ENCODE measurements at regions of chr15 and their contacts with region 1.

Region 1: GRCh38 chr15:44654858-44655257 is 8.6 kb downstream of the SPG11 start:
- DNase-seq: no peak
- ATAC-seq: no peak
- H3K4me3 ChIP-seq: no peak overlapping the region
- H3K4me3 Mint-ChIP-seq: no peak overlapping the region
- H3K27ac ChIP-seq: no peak overlapping the region
- H3K27ac Mint-ChIP-seq: peak overlapping the region in 1 of 9 donors; percentile 31
- H3K4me1 ChIP-seq: no peaks in the 10 kb centered on the region
- H3K4me1 Mint-ChIP-seq: peaks cover 18 to 58% (median 49%) of the 10 kb centered on the region in 7 donors
- H3K27me3 ChIP-seq: no peaks in the 10 kb centered on the region
- H3K27me3 Mint-ChIP-seq: no peaks in the 10 kb centered on the region

Region 2: GRCh38 chr15:44633603-44634002 is 21.3 kb before region 1 on chr15:
- CTCF ChIA-PET with region 1: no interaction called
- POLR2A ChIA-PET with region 1: interaction called, 4 read pairs
- intact Hi-C with region 1: loop called in 1 of 2 experiments (anchors 2 kb)
- DNase-seq: no peak
- ATAC-seq: no peak
- H3K4me3 ChIP-seq: no peak overlapping the region
- H3K4me3 Mint-ChIP-seq: peak overlapping the region in 1 of 10 donors; percentile 51
- H3K27ac ChIP-seq: no peak overlapping the region
- H3K27ac Mint-ChIP-seq: peak overlapping the region in 4 of 9 donors; percentile 48 to 81 (median 56)
- H3K4me1 ChIP-seq: no peaks in the 10 kb centered on the region
- H3K4me1 Mint-ChIP-seq: peaks cover 0 to 11% (median 5%) of the 10 kb centered on the region in 7 donors
- H3K27me3 ChIP-seq: no peaks in the 10 kb centered on the region
- H3K27me3 Mint-ChIP-seq: no peaks in the 10 kb centered on the region

Region 3: DNA sequence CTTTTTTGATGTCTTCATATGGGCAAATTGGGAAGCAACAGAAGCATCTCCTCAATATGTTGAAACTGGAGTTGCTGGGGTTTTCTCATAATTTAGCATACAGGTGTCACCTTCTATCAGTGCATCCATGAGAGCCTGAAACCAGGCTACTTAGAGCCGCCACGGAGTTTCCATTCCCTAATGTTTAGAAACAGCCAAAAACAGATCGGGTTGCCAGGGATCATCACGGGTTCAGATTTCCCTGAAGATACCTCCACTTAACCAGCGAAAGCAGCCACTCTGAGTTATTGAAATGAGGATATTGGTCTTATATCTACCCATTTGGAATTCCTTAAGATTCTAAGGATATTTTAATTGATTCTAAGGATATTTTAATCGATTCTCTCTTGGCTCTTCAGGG is 316.2 kb after region 1 on chr15:
- CTCF ChIA-PET with region 1: no interaction called
- POLR2A ChIA-PET with region 1: no interaction called
- intact Hi-C with region 1: no loop called
- DNase-seq: no peak
- ATAC-seq: no peak
- H3K4me3 ChIP-seq: no peak overlapping the region
- H3K4me3 Mint-ChIP-seq: no peak overlapping the region
- H3K27ac ChIP-seq: no peak overlapping the region
- H3K27ac Mint-ChIP-seq: no peak overlapping the region
- H3K4me1 ChIP-seq: no peaks in the 10 kb centered on the region
- H3K4me1 Mint-ChIP-seq: no peaks in the 10 kb centered on the region
- H3K27me3 ChIP-seq: no peaks in the 10 kb centered on the region
- H3K27me3 Mint-ChIP-seq: peaks cover 0 to 16% (median 0%) of the 10 kb centered on the region in 5 donors

Measured in naive thymus-derived CD4-positive, alpha-beta T cell (primary cell).